ENCODE measurements at regions of chr10 and their contacts with region 1.

Region 1: GRCh38 chr10:72048450-72049124 is 39.8 kb downstream of the SPOCK2 start:
- DNase-seq: peak; percentile 68 to 88 (median 83)
- ATAC-seq: peak; percentile 99
- H3K4me3 ChIP-seq: no peak overlapping the region
- H3K4me3 Mint-ChIP-seq: no peak overlapping the region
- H3K27ac ChIP-seq: no peak overlapping the region
- H3K27ac Mint-ChIP-seq: peak overlapping the region in 6 of 9 donors; percentile 5 to 67 (median 32)
- H3K4me1 ChIP-seq: no peaks in the 10 kb centered on the region
- H3K4me1 Mint-ChIP-seq: peaks cover 7 to 10% (median 8%) of the 10 kb centered on the region in 7 donors
- H3K27me3 ChIP-seq: no peaks in the 10 kb centered on the region
- H3K27me3 Mint-ChIP-seq: no peaks in the 10 kb centered on the region

Region 2: GRCh38 chr10:71128311-71128980 is 920.1 kb before region 1 on chr10:
- CTCF ChIA-PET with region 1: no interaction called
- POLR2A ChIA-PET with region 1: no interaction called
- intact Hi-C with region 1: no loop called
- DNase-seq: no peak
- ATAC-seq: no peak
- H3K4me3 ChIP-seq: no peak overlapping the region
- H3K4me3 Mint-ChIP-seq: peak overlapping the region in 2 of 10 donors; percentile 1 to 15
- H3K27ac ChIP-seq: no peak overlapping the region
- H3K27ac Mint-ChIP-seq: peak overlapping the region in 1 of 9 donors; percentile 14
- H3K4me1 ChIP-seq: no peaks in the 10 kb centered on the region
- H3K4me1 Mint-ChIP-seq: peaks cover 0 to 11% (median 8%) of the 10 kb centered on the region in 7 donors
- H3K27me3 ChIP-seq: no peaks in the 10 kb centered on the region
- H3K27me3 Mint-ChIP-seq: peaks cover 23 to 32% (median 28%) of the 10 kb centered on the region in 5 donors

Region 3: GRCh38 chr10:71561003-71561574 is 487.5 kb before region 1 on chr10:
- CTCF ChIA-PET with region 1: no interaction called
- POLR2A ChIA-PET with region 1: no interaction called
- intact Hi-C with region 1: no loop called
- DNase-seq: no peak
- ATAC-seq: no peak
- H3K4me3 ChIP-seq: no peak overlapping the region
- H3K4me3 Mint-ChIP-seq: no peak overlapping the region
- H3K27ac ChIP-seq: no peak overlapping the region
- H3K27ac Mint-ChIP-seq: no peak overlapping the region
- H3K4me1 ChIP-seq: no peaks in the 10 kb centered on the region
- H3K4me1 Mint-ChIP-seq: peaks cover 0 to 4% (median 0%) of the 10 kb centered on the region in 7 donors
- H3K27me3 ChIP-seq: no peaks in the 10 kb centered on the region
- H3K27me3 Mint-ChIP-seq: peaks cover 4 to 16% (median 14%) of the 10 kb centered on the region in 5 donors

Region 4: DNA sequence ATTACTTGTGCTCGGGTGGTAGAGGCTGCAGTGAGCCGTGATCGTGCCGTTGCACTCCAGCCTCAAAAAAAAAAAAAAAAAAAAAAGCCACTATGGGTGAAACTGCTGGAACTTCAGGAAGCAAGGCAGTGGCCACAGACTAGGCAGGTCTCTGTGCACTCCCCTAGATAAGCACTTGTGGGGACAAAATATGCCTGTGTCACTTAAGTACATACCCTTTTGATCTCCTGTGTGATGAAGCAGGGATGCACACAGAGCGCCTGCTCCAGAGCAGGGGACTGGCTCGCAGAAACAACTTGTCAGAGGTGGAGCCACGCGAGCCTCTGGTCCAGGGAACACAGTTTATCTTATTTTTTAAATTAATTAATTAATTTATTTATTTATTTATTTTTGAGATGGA is 154.7 kb before region 1 on chr10:
- CTCF ChIA-PET with region 1: interaction called, 111 read pairs
- POLR2A ChIA-PET with region 1: interaction called, 13 read pairs
- intact Hi-C with region 1: loop called (anchors 1 kb)
- DNase-seq: no peak
- ATAC-seq: no peak
- H3K4me3 ChIP-seq: no peak overlapping the region
- H3K4me3 Mint-ChIP-seq: no peak overlapping the region
- H3K27ac ChIP-seq: no peak overlapping the region
- H3K27ac Mint-ChIP-seq: peak overlapping the region in 1 of 9 donors; percentile 78
- H3K4me1 ChIP-seq: peaks cover 0 to 11% of the 10 kb centered on the region in 2 donors
- H3K4me1 Mint-ChIP-seq: peaks cover 5 to 22% (median 11%) of the 10 kb centered on the region in 7 donors
- H3K27me3 ChIP-seq: no peaks in the 10 kb centered on the region
- H3K27me3 Mint-ChIP-seq: peaks cover 0 to 7% (median 0%) of the 10 kb centered on the region in 5 donors

Region 5: GRCh38 chr10:71974489-71975021 is 74.0 kb before region 1 on chr10:
- CTCF ChIA-PET with region 1: no interaction called
- POLR2A ChIA-PET with region 1: no interaction called
- intact Hi-C with region 1: no loop called
- DNase-seq: peak in 1 of 9 donors; percentile 40
- ATAC-seq: peak; percentile 18
- H3K4me3 ChIP-seq: no peak overlapping the region
- H3K4me3 Mint-ChIP-seq: no peak overlapping the region
- H3K27ac ChIP-seq: no peak overlapping the region
- H3K27ac Mint-ChIP-seq: no peak overlapping the region
- H3K4me1 ChIP-seq: no peaks in the 10 kb centered on the region
- H3K4me1 Mint-ChIP-seq: peaks cover 0 to 12% (median 4%) of the 10 kb centered on the region in 7 donors
- H3K27me3 ChIP-seq: no peaks in the 10 kb centered on the region
- H3K27me3 Mint-ChIP-seq: no peaks in the 10 kb centered on the region

Region 6: DNA sequence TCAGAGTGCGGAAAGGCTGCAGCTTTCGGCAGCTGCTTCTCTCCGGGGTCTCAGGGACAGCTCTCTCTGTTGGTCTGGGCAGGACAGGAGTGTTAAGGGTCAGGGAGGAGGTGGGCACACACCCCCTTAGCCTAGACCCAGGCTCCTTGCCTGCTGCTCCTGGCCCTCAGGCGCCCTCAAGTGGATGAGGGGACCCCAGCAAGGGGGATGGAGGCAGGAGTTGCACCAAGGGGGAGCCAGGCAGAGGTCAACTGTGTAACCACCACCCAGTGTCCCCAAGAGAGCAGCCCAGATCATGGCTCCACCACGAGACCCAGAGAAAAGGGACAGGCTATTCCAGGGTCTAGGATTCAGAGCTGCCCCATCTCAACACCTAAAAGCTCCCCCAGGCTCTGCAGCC is 12.9 kb after region 1 on chr10:
- CTCF ChIA-PET with region 1: interaction called, 16 read pairs
- POLR2A ChIA-PET with region 1: interaction called, 5 read pairs
- intact Hi-C with region 1: loop called in 1 of 2 experiments (anchors 1 kb)
- DNase-seq: no peak
- ATAC-seq: peak; percentile 22
- H3K4me3 ChIP-seq: no peak overlapping the region
- H3K4me3 Mint-ChIP-seq: peak overlapping the region in 2 of 10 donors; percentile 32 to 66
- H3K27ac ChIP-seq: no peak overlapping the region
- H3K27ac Mint-ChIP-seq: peak overlapping the region; percentile 34 to 91 (median 80)
- H3K4me1 ChIP-seq: no peaks in the 10 kb centered on the region
- H3K4me1 Mint-ChIP-seq: peaks cover 0 to 37% (median 24%) of the 10 kb centered on the region in 7 donors
- H3K27me3 ChIP-seq: no peaks in the 10 kb centered on the region
- H3K27me3 Mint-ChIP-seq: no peaks in the 10 kb centered on the region

Region 7: DNA sequence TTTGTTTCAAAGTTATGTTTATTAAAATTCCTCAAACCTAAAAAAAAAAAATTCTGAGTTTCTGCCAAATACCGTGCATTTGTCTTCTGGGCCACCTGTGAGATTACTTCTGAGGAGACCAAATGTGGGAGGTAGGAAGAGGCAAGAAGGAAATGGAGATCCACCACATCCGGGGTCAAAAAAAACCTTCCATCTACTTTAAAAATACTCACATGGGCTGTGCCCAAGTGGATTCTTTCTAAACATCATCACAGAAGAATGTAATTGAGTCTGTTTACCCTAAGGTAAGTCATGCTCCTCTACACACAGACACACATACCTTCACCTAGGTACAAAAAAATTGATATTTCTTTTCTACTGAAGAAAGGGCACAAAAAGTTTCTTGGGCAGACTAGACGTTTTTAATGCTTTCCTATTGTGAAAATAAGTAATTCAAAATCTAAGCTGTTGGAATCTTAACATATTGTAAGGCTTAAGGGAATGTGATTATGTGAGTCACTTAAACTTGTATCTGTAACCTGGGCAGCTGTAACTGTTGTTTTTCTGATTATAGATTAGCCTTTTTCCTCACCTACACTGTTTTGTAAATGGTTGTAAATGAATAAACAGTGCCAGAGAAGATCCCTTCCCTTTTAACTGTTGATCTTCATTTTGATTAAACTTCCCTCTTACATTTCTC is 58.9 kb after region 1 on chr10:
- CTCF ChIA-PET with region 1: interaction called, 6 read pairs
- POLR2A ChIA-PET with region 1: no interaction called
- intact Hi-C with region 1: loop called in 1 of 2 experiments (anchors 1 kb)
- DNase-seq: peak in 7 of 9 donors; percentile 63 to 77 (median 74)
- ATAC-seq: peak; percentile 82
- H3K4me3 ChIP-seq: peak overlapping the region; percentile 10
- H3K4me3 Mint-ChIP-seq: peak overlapping the region; percentile 67 to 85 (median 78)
- H3K27ac ChIP-seq: peak overlapping the region; percentile 72
- H3K27ac Mint-ChIP-seq: peak overlapping the region; percentile 79 to 96 (median 89)
- H3K4me1 ChIP-seq: peaks cover 32 to 84% of the 10 kb centered on the region in 2 donors
- H3K4me1 Mint-ChIP-seq: peaks cover 53 to 96% (median 89%) of the 10 kb centered on the region in 7 donors
- H3K27me3 ChIP-seq: no peaks in the 10 kb centered on the region
- H3K27me3 Mint-ChIP-seq: no peaks in the 10 kb centered on the region

Region 8: GRCh38 chr10:72162978-72163377 is 114.4 kb after region 1 on chr10:
- CTCF ChIA-PET with region 1: interaction called, 4 read pairs
- POLR2A ChIA-PET with region 1: interaction called, 3 read pairs
- intact Hi-C with region 1: loop called in 1 of 2 experiments (anchors 2 kb)
- DNase-seq: no peak
- ATAC-seq: peak; percentile 40
- H3K4me3 ChIP-seq: no peak overlapping the region
- H3K4me3 Mint-ChIP-seq: no peak overlapping the region
- H3K27ac ChIP-seq: no peak overlapping the region
- H3K27ac Mint-ChIP-seq: no peak overlapping the region
- H3K4me1 ChIP-seq: peaks cover 0 to 4% of the 10 kb centered on the region in 2 donors
- H3K4me1 Mint-ChIP-seq: peaks cover 0 to 16% (median 13%) of the 10 kb centered on the region in 7 donors
- H3K27me3 ChIP-seq: no peaks in the 10 kb centered on the region
- H3K27me3 Mint-ChIP-seq: no peaks in the 10 kb centered on the region

Region 9: DNA sequence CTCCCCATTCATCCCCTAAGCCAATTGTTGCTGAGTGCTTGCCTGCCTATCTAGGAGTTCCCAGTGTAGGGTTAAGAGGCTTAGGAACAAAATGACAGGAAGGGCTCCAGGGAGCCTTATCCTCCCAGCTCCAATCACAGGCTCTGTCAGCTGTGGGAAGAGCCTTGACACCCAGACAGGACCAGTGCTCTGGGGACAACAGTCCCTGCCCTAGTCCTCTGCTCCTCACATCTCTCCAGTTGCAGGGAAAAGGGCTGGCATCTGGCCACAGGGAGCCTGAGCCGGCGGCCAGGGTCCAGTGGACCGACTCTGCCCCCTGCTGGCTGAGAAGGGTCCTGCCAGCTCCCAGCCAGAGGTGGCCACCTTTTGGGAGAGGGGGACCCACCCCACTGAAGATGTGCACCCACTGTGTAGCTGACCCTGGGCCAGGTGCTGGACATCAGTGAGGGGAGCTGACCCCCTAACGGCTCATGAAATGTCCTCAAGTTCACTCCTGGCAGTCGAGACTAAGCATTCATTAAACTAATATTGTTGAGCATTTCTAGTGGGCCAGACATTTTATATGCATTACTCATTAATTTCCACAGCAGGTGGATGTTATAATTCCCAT is 288.5 kb after region 1 on chr10:
- CTCF ChIA-PET with region 1: interaction called, 23 read pairs
- POLR2A ChIA-PET with region 1: no interaction called
- intact Hi-C with region 1: loop called (anchors 1 kb)
- DNase-seq: peak; percentile 34 to 77 (median 56)
- ATAC-seq: peak; percentile 25
- H3K4me3 ChIP-seq: no peak overlapping the region
- H3K4me3 Mint-ChIP-seq: peak overlapping the region in 4 of 10 donors; percentile 12 to 93 (median 30)
- H3K27ac ChIP-seq: peak overlapping the region; percentile 79
- H3K27ac Mint-ChIP-seq: peak overlapping the region; percentile 29 to 99 (median 92)
- H3K4me1 ChIP-seq: peaks cover 52 to 58% of the 10 kb centered on the region in 2 donors
- H3K4me1 Mint-ChIP-seq: peaks cover 31 to 66% (median 55%) of the 10 kb centered on the region in 7 donors
- H3K27me3 ChIP-seq: no peaks in the 10 kb centered on the region
- H3K27me3 Mint-ChIP-seq: no peaks in the 10 kb centered on the region